ENCODE measurements at regions of chr17 and their contacts with region 1.

Region 1: DNA sequence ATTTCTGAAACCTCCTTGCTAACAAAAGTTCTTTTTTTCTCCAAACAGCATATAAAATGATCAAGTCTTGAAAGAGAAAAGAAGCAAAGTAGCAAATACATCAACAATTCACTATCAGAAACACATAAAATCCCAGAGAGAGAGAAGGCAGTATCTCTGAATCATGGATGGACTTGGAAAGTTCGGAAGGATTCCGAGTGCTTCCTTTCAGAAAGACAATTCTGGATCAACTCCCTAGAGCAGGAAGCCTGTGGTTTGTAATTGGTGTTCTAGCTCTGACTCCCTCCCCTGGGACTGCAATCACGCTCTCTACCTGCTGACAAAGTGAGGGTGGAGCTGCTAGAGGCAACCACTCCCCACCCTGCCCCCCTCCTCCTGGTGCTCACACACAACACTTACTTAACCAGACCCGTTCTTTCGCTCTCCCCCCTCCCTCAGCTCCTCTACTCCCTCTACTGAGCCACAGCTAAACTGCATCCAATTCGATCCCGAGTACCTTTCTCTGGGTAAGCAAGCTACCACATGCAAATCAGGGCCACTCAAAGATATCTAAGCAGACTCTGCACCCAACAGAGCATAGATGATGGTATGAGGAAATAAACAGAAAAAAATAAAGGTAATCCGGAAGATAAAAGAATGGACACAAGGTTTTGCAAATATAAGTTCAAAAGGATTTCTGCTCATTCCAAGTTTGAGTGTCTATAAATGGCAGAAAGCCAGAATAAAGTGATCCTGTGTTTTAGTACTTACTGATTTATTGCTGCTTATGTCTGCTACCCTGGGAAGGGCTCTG is at the start of gene RNF43:
- DNase-seq: peak; percentile 96 to 98
- ATAC-seq: peak; percentile 98 to 99
- H3K4me3 ChIP-seq: peak within 1 kb of the TSS; percentile 47
- H3K27ac ChIP-seq: peak within 1 kb of the TSS; percentile 76 to 77
- H3K4me1 ChIP-seq: peaks cover 24% of the 10 kb centered on the region; the same call in 2 of the 3 replicates
- CTCF ChIP-seq: peak; percentile 86
- EP300 ChIP-seq: no peak
- POLR2A ChIP-seq: no peak
- RAD21 ChIP-seq: peak; percentile 92 to 95
- polyA plus RNA-seq, gene RNF43: 6.3 and 6.6 TPM in 2 replicates

Region 2: GRCh38 chr17:58329035-58329809 is 88.3 kb before region 1 on chr17:
- CTCF ChIA-PET with region 1: interaction called, 232 read pairs
- POLR2A ChIA-PET with region 1: interaction called, 3 read pairs
- DNase-seq: no peak
- ATAC-seq: peak; percentile 25 to 67; a peak in 4 of 6 replicates
- H3K4me3 ChIP-seq: no peak overlapping the region
- H3K27ac ChIP-seq: 0 out of 6 replicates have a peak overlapping the region, but pooled peaks of 1 of the 2 experiments have one; percentile 4
- H3K4me1 ChIP-seq: peaks cover 9% of the 10 kb centered on the region
- CTCF ChIP-seq: peak; percentile 36
- EP300 ChIP-seq: no peak
- POLR2A ChIP-seq: no peak
- RAD21 ChIP-seq: peak in 1 of 2 experiments; percentile 14; a peak in 1 of 5 replicates

Region 3: GRCh38 chr17:58357297-58357993 is 60.1 kb before region 1 on chr17:
- CTCF ChIA-PET with region 1: interaction called, 38 read pairs
- POLR2A ChIA-PET with region 1: interaction called, 87 read pairs
- DNase-seq: no peak
- ATAC-seq: no peak
- H3K4me3 ChIP-seq: no peak overlapping the region
- H3K27ac ChIP-seq: no peak overlapping the region
- H3K4me1 ChIP-seq: peaks cover 7% of the 10 kb centered on the region; the same call in 1 of the 3 replicates
- CTCF ChIP-seq: no peak
- EP300 ChIP-seq: no peak
- POLR2A ChIP-seq: no peak
- RAD21 ChIP-seq: no peak

Region 4: DNA sequence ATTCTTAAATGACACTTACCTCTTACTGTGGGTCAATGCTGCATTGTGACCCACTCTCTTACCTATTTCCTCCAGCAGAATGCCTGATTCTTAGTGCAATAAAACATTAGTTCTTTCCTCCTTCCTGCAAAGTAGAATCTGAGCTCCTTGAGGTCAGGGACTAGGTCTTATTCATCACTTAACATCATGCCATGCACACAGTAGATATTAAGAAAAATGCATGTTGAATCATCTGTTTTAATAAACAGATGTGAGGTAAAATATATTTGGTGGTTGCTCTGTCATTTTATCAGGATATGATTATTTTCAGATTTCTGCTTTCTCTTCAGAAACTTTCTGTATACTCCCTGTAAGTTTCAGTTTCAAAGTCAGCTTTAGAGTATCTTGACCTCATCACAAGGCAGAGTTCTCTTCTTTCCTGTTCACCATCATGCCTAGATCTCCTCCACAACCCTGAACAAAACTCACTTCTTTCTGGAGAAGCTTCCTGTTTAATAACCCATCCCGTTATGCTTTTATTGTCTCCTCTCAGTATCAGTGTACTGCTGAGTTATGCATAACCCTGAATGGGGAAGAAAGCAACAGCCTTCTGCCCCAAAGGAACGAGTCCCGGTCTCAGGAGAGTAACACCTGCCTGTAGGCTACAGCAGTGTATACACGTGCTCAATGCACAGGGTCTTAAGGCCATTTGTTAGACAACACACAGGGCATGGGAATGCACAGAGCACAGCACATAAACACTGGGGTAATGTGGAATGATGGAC is 35.2 kb before region 1 on chr17:
- CTCF ChIA-PET with region 1: interaction called, 31 read pairs
- POLR2A ChIA-PET with region 1: no interaction called
- DNase-seq: no peak
- ATAC-seq: peak; percentile 15 to 31; a peak in 2 of 6 replicates
- H3K4me3 ChIP-seq: no peak overlapping the region
- H3K27ac ChIP-seq: peak overlapping the region; percentile 70 to 73
- H3K4me1 ChIP-seq: peaks cover 74% of the 10 kb centered on the region
- CTCF ChIP-seq: no peak
- EP300 ChIP-seq: no peak
- POLR2A ChIP-seq: no peak
- RAD21 ChIP-seq: no peak

Region 5: GRCh38 chr17:58402047-58402446 is 15.4 kb before region 1 on chr17:
- CTCF ChIA-PET with region 1: interaction called, 10 read pairs
- POLR2A ChIA-PET with region 1: no interaction called
- DNase-seq: no peak
- ATAC-seq: no peak
- H3K4me3 ChIP-seq: no peak overlapping the region
- H3K27ac ChIP-seq: peak overlapping the region in 1 of 2 experiments; percentile 0; a peak in 1 of 6 replicates
- H3K4me1 ChIP-seq: peaks cover 24% of the 10 kb centered on the region
- CTCF ChIP-seq: no peak
- EP300 ChIP-seq: no peak
- POLR2A ChIP-seq: no peak
- RAD21 ChIP-seq: no peak

Region 6: DNA sequence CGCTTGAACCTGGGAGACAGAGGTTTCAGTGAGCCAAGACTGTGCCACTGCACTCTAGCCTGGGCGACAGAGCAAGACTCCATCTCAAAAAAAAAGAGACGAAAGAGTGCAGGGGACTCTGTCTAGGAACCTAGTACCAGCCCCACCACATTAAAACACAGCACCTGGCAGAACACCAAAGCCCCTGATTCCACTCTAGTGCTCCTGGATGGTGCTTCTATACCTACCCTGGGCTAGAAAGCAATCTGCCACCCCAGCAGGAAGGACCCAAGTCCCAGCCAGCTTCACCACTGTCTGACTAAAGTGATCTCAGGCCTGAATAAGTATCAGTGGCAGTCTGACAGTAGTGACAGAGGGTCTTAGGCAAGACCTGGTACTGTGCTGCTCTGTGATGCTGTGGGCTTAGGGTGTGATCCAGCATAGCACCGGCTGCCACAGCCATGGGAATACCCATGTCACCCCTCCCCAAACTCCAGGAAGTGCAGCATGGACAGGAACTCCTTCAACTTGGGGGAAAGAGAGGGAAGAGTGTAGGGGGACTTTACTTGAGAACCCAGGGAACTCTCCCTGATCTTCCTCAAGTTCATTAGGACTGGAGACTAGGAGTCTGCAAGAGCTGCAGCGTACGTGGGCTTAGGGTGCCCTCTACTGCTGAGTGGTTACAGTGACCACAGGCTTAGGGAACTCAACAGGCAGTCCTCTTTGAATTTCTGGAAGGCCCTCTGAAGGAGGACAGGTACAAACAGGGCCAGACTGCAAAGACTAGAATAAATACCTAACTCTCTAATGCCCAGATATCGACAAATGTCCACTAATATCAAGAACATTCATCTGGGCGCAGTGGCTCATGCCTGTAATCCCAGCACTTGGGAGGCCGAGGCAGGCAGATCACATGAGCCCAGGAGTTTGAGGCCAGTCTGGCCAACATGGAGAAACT is 29.8 kb after region 1 on chr17:
- CTCF ChIA-PET with region 1: interaction called, 11 read pairs
- POLR2A ChIA-PET with region 1: no interaction called
- DNase-seq: peak; percentile 83 to 92
- ATAC-seq: peak; percentile 100
- H3K4me3 ChIP-seq: no peak overlapping the region
- H3K27ac ChIP-seq: no peak overlapping the region
- H3K4me1 ChIP-seq: no peaks in the 10 kb centered on the region
- CTCF ChIP-seq: peak; percentile 99
- EP300 ChIP-seq: no peak
- POLR2A ChIP-seq: no peak
- RAD21 ChIP-seq: peak; percentile 99 to 100

Region 7: GRCh38 chr17:58531661-58532554 is 114.4 kb after region 1 on chr17:
- CTCF ChIA-PET with region 1: no interaction called
- POLR2A ChIA-PET with region 1: no interaction called
- DNase-seq: no peak
- ATAC-seq: peak; percentile 51 to 66
- H3K4me3 ChIP-seq: peak overlapping the region; percentile 71
- H3K27ac ChIP-seq: peak overlapping the region; percentile 61 to 81
- H3K4me1 ChIP-seq: peaks cover 24% of the 10 kb centered on the region
- CTCF ChIP-seq: no peak
- EP300 ChIP-seq: no peak
- POLR2A ChIP-seq: 0 out of 2 replicates have a peak, but pooled peaks have one; percentile 7
- RAD21 ChIP-seq: no peak